ENCODE measurements at regions of chr13 and their contacts with region 1.

Region 1: GRCh38 chr13:41668130-41668757 is 210.9 kb downstream of the RGCC start:
- DNase-seq: peak; percentile 55 to 90
- ATAC-seq: peak; percentile 98
- H3K4me3 ChIP-seq: no peak overlapping the region
- H3K27ac ChIP-seq: peak overlapping the region in 1 of 2 experiments; percentile 58; a peak in 2 of 6 replicates
- H3K4me1 ChIP-seq: peaks cover 23% of the 10 kb centered on the region
- CTCF ChIP-seq: peak; percentile 78
- EP300 ChIP-seq: no peak
- POLR2A ChIP-seq: no peak
- RAD21 ChIP-seq: peak; percentile 90 to 91

Region 2: DNA sequence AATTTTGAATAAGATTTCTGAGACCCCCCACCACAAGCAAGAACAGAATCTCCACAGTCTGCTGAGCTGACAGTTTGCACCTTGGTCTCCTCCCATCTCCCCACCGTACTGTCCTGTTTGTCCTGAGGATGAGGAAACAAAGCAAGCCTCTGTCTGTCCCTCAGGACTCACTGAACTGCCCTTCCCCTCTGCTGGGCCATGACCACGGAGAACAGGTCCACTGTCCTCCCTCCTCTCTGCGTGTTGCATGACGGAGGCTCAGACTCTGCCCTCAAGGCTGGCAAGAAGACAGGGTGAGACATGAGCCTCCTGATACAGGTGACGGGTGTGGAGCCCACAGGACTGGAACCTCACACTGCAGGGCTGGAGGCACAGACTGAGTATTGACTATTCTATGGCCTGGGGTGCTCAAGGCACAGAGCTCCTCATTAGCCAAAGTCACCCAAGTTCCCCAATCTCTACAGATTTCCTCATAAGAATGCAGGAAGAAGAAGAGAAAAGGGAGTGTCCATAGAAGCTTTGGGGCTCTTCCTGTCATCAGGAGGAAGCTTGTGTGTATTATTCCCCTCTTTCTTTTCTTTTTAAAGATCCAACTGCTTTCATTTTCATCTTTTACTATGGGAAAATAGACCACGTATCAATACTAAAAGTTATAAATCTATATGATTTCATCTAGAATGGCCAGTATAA is 233.3 kb before region 1 on chr13:
- CTCF ChIA-PET with region 1: no interaction called
- POLR2A ChIA-PET with region 1: no interaction called
- DNase-seq: no peak
- ATAC-seq: no peak
- H3K4me3 ChIP-seq: no peak overlapping the region
- H3K27ac ChIP-seq: no peak overlapping the region
- H3K4me1 ChIP-seq: no peaks in the 10 kb centered on the region
- CTCF ChIP-seq: no peak
- EP300 ChIP-seq: no peak
- POLR2A ChIP-seq: no peak
- RAD21 ChIP-seq: no peak

Region 3: DNA sequence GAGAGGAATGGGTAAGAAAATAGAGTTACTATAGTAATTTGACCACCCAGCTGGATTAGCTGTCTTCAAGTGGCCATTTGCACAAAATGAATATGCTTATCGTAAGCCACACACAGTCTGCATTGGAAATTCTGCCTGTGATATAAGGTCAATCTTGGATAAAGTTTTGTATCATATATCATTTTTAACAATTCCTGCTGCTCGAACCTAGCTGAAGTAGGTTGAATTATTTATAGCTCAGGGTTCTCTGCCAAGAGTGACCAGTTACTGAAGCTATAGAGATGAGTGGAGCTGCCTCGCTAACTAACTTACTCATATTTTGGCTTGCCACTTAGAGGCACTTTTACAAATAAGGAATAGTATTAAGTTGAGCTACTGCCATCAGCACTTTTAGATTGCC is 10.0 kb after region 1 on chr13:
- CTCF ChIA-PET with region 1: interaction called, 29 read pairs
- POLR2A ChIA-PET with region 1: no interaction called
- DNase-seq: no peak
- ATAC-seq: no peak
- H3K4me3 ChIP-seq: no peak overlapping the region
- H3K27ac ChIP-seq: no peak overlapping the region
- H3K4me1 ChIP-seq: no peaks in the 10 kb centered on the region
- CTCF ChIP-seq: no peak
- EP300 ChIP-seq: no peak
- POLR2A ChIP-seq: no peak
- RAD21 ChIP-seq: no peak

Region 4: DNA sequence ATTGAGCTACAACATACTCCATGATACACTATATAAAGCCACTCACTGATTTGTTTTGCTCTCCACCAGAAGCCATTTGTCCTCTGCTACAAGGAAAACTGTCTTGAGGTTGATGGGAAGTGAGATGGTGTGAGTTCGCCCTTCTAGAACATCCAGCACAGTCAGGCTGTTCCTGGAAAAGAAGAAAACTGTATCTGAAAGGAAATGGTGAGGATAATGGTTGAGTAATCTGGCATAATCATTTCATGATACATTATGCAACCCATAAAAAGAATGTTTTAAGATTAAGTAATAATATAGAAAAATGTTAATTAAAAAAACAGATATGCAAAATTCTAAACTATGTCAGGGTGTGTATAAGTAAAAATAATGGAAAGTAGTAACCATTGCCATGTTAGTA is 23.0 kb after region 1 on chr13:
- CTCF ChIA-PET with region 1: interaction called, 10 read pairs
- POLR2A ChIA-PET with region 1: interaction called, 3 read pairs
- DNase-seq: no peak
- ATAC-seq: no peak
- H3K4me3 ChIP-seq: no peak overlapping the region
- H3K27ac ChIP-seq: no peak overlapping the region
- H3K4me1 ChIP-seq: peaks cover 39% of the 10 kb centered on the region
- CTCF ChIP-seq: no peak
- EP300 ChIP-seq: no peak
- POLR2A ChIP-seq: no peak
- RAD21 ChIP-seq: no peak

Region 5: GRCh38 chr13:41942462-41943094 is 274.3 kb after region 1 on chr13:
- CTCF ChIA-PET with region 1: interaction called, 10 read pairs
- POLR2A ChIA-PET with region 1: no interaction called
- DNase-seq: peak; percentile 6 to 55
- ATAC-seq: peak; percentile 82 to 92
- H3K4me3 ChIP-seq: no peak overlapping the region
- H3K27ac ChIP-seq: no peak overlapping the region
- H3K4me1 ChIP-seq: peaks cover 21% of the 10 kb centered on the region
- CTCF ChIP-seq: 0 out of 3 replicates have a peak, but pooled peaks have one; percentile 8
- EP300 ChIP-seq: no peak
- POLR2A ChIP-seq: no peak
- RAD21 ChIP-seq: peak; percentile 29 to 31; a peak in 2 of 5 replicates

Region 6: DNA sequence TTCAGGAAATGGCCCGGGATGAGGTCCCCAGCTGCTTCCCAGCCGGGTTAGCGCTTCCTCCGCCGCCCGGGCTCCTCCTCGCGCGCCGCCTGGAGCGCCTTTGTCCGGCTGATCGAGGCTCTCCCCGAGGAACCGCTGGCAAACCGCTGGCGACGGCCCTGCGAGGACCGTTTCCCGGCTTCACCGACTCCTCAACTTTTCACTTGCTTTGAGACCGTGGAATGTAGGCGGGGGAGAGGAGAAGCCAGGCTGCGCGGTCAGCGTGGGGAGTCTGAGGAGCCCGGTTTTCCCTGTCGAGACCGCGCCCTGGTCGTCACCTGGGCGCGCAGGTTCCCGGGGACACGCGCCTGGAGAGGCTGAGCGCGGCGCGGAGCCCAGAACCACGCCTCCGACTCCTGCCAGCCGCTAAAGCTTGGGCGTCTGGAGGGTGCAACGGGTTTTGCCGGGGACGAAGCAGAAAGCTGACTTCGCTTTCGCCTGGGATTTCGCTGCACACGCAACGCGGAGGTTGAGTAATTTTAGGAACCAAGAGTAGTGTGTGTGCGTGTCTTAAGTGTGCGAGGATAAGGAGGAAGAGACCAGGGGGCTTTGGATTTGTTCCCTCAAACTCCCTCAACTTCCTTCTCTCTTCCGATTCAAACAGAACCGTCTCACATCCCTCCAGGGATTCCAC is 372.9 kb after region 1 on chr13:
- CTCF ChIA-PET with region 1: interaction called, 24 read pairs
- POLR2A ChIA-PET with region 1: interaction called, 5 read pairs
- DNase-seq: peak; percentile 16 to 61
- ATAC-seq: peak; percentile 69 to 75
- H3K4me3 ChIP-seq: peak overlapping the region; percentile 63
- H3K27ac ChIP-seq: peak overlapping the region; percentile 84 to 100
- H3K4me1 ChIP-seq: peaks cover 9% of the 10 kb centered on the region; the same call in 2 of the 3 replicates
- CTCF ChIP-seq: no peak
- EP300 ChIP-seq: no peak
- POLR2A ChIP-seq: no peak; the same call in 1 of the 2 replicates
- RAD21 ChIP-seq: no peak

Region 7: DNA sequence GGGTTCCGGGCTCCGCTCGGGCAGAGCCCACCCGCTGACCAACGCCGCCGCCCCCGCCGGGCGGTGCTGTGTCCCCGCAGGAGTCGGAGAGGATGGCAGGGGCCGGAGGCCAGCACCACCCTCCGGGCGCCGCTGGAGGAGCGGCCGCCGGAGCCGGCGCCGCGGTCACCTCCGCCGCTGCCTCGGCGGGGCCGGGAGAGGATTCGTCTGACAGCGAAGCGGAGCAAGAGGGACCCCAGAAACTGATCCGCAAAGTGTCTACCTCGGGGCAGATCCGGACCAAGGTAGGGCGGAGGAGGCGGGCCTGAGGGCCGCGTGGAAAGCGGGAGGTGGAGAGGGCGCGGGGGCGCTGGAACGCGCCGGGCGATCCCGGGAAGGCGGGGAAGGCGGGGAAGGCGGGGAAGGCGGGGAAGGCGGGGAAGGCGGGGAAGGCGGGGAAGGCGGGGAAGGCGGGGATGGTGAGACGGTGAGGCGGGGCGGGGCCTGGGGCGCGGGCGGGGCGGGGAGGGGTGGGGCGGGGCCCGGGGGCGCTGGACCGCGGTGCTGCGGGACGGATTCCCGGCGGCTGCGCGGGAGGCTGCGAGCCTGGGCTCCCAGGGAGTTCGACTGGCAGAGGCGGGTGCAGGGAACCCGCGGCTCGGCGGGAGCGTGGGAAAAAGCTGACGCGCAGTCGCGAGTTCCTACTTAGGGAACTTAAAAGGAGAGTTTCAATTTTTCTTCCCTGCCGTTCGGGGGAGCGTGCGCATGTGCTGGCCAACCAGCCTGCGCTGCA is 380.6 kb after region 1 on chr13:
- CTCF ChIA-PET with region 1: interaction called, 24 read pairs
- POLR2A ChIA-PET with region 1: interaction called, 6 read pairs
- DNase-seq: peak; percentile 61 to 70
- ATAC-seq: peak; percentile 80 to 83
- H3K4me3 ChIP-seq: peak overlapping the region; percentile 64
- H3K27ac ChIP-seq: peak overlapping the region; percentile 92 to 100
- H3K4me1 ChIP-seq: peaks cover 20% of the 10 kb centered on the region
- CTCF ChIP-seq: peak; percentile 15; the same call in 1 of the 3 replicates
- EP300 ChIP-seq: no peak
- POLR2A ChIP-seq: peak; percentile 29
- RAD21 ChIP-seq: peak; percentile 4 to 28; a peak in 3 of 5 replicates

Region 8: GRCh38 chr13:42110410-42111155 is 442.3 kb after region 1 on chr13:
- CTCF ChIA-PET with region 1: interaction called, 27 read pairs
- POLR2A ChIA-PET with region 1: no interaction called
- DNase-seq: peak; percentile 36 to 63
- ATAC-seq: peak in 1 of 2 experiments; percentile 41; a peak in 1 of 6 replicates
- H3K4me3 ChIP-seq: no peak overlapping the region
- H3K27ac ChIP-seq: peak overlapping the region; percentile 39 to 48; a peak in 2 of 6 replicates
- H3K4me1 ChIP-seq: peaks cover 25% of the 10 kb centered on the region
- CTCF ChIP-seq: peak; percentile 77
- EP300 ChIP-seq: no peak
- POLR2A ChIP-seq: no peak
- RAD21 ChIP-seq: peak; percentile 83 to 87

Measured in A549 (cell line).